Gastrocnemius medialis (tissue), 4 donors: ENCODE measurements at regions of chr12 and their contacts with region 1.

Region 1: GRCh38 chr12:123633379-123634141 is at the starts of genes EIF2B1 and GTF2H3:
- DNase-seq: peak; percentile 92 to 96
- ATAC-seq: peak; percentile 99
- H3K4me3 ChIP-seq: peak within 1 kb of the TSS; percentile 86 to 97 (median 95)
- H3K27ac ChIP-seq: peak within 1 kb of the TSS; percentile 74 to 89 (median 84)
- H3K4me1 ChIP-seq: peaks cover 12% of the 10 kb centered on the region in 2 donors
- H3K27me3 ChIP-seq: no peaks in the 10 kb centered on the region
- CTCF ChIP-seq: peak in 2 of 5 experiments; percentile 14 to 20
- POLR2A ChIP-seq: peak; percentile 63 to 85
- total RNA-seq, gene EIF2B1: 84.5 to 118 (median 112) TPM
- total RNA-seq, gene GTF2H3: 11.5 to 14.3 (median 12.3) TPM

Region 2: GRCh38 chr12:122980183-122981046 is 653.1 kb before region 1 on chr12 and contains the start of gene ARL6IP4:
- in situ Hi-C with region 1: no loop called
- intact Hi-C with region 1: no loop called
- DNase-seq: no peak
- ATAC-seq: peak; percentile 71 to 72
- H3K4me3 ChIP-seq: peak within 1 kb of the TSS; percentile 83 to 97 (median 92)
- H3K27ac ChIP-seq: peak within 1 kb of the TSS; percentile 79 to 91 (median 91)
- H3K4me1 ChIP-seq: peaks cover 50 to 74% of the 10 kb centered on the region in 2 donors
- H3K27me3 ChIP-seq: no peaks in the 10 kb centered on the region
- CTCF ChIP-seq: peak in 2 of 5 experiments; percentile 12 to 17
- POLR2A ChIP-seq: peak; percentile 80 to 86
- total RNA-seq, gene ARL6IP4: 123 to 175 (median 156) TPM

Region 3: GRCh38 chr12:123670882-123671728 is 37.5 kb after region 1 on chr12 and contains the start of gene TCTN2:
- in situ Hi-C with region 1: no loop called
- intact Hi-C with region 1: loop called (anchors 5 kb)
- DNase-seq: peak; percentile 89 to 92
- ATAC-seq: peak; percentile 95 to 98
- H3K4me3 ChIP-seq: peak within 1 kb of the TSS; percentile 68 to 93 (median 86)
- H3K27ac ChIP-seq: peak within 1 kb of the TSS in 1 of 4 donors; percentile 20
- H3K4me1 ChIP-seq: peaks cover 8 to 9% of the 10 kb centered on the region in 2 donors
- H3K27me3 ChIP-seq: no peaks in the 10 kb centered on the region
- CTCF ChIP-seq: no peak
- POLR2A ChIP-seq: no peak
- total RNA-seq, gene TCTN2: 1.2 to 5.0 (median 1.6) TPM

Region 4: DNA sequence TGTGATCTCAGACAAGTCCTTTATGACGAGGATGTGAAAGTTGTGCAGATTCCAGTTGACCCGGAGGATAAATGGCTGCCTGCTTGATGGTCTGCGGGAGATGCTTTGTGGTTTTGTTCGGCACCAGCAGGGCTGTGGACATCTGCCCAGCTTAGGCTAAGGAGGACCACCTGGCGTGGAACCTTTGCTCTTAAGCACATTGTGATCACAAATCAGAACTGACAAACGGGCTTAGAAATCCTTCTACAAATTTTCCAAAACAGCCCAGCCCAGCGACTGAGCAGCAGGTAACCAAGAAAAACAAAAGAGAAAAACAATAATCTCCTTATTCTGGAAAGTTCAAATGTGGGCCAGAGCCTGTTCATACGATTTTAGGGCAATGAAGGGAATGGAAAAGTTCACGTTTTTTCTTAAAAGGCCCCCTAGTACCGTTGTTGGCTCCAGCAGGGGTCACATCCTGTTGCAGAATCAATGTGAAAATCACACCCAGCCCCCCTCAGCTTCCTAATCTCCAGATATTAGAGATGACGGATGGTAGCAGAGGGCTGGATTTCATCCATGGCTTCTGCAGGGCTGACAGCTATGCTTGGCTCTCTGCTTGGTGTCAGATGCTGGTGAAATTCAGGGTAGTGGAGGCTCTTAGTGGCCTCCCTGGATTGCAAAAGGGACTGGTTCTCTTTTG is 580.2 kb after region 1 on chr12:
- in situ Hi-C with region 1: no loop called
- intact Hi-C with region 1: no loop called
- DNase-seq: no peak
- ATAC-seq: no peak
- H3K4me3 ChIP-seq: no peak overlapping the region
- H3K27ac ChIP-seq: no peak overlapping the region
- H3K4me1 ChIP-seq: peaks cover 0 to 5% of the 10 kb centered on the region in 2 donors
- H3K27me3 ChIP-seq: peaks cover 0 to 2% (median 0%) of the 10 kb centered on the region in 3 donors
- CTCF ChIP-seq: no peak
- POLR2A ChIP-seq: no peak